GM23248 (cell line): ENCODE measurements at regions of chr10 and their contacts with region 1.

Region 1: DNA sequence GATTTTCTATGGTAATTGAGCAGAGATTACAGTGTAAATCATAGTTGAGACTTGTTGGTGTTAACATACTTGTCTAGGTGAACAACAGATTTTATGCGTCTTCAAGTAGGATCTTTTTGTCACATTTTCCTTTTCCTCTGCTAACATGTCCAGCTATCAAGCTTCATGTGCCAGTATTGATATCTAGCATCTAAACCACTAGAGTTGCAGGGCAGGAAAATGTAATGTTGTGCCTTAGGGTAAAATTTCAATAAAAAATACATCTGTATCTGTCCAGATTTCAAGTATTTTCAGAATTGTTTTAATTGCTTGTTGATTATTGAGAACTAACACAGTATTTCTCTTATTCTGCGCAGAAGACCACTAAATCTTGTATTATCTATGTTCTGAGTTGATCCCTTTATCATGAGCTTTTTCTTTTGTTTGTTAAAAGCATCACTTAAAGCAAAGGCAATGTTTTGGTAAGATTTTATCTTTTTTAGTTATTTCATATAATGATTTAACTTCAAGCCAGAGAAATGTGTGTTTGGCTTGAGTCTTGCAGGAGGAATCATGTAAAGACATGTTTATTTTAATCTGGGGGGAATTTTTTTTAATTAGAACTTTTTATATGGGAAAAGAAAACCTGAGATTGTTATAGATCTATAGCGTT is 16.5 kb downstream of the BICC1 start:
- DNase-seq: no peak
- H3K4me3 ChIP-seq: no peak overlapping the region
- H3K27ac ChIP-seq: no peak overlapping the region
- H3K4me1 ChIP-seq: peaks cover 11% of the 10 kb centered on the region
- H3K27me3 ChIP-seq: no peaks in the 10 kb centered on the region

Region 2: GRCh38 chr10:58641095-58641531 is 111.9 kb after region 1 on chr10:
- in situ Hi-C with region 1: loop called (anchors 10 kb)
- DNase-seq: peak; percentile 96
- H3K4me3 ChIP-seq: peak overlapping the region; percentile 57
- H3K27ac ChIP-seq: peak overlapping the region; percentile 96
- H3K4me1 ChIP-seq: peaks cover 86% of the 10 kb centered on the region
- H3K27me3 ChIP-seq: no peaks in the 10 kb centered on the region

Region 3: DNA sequence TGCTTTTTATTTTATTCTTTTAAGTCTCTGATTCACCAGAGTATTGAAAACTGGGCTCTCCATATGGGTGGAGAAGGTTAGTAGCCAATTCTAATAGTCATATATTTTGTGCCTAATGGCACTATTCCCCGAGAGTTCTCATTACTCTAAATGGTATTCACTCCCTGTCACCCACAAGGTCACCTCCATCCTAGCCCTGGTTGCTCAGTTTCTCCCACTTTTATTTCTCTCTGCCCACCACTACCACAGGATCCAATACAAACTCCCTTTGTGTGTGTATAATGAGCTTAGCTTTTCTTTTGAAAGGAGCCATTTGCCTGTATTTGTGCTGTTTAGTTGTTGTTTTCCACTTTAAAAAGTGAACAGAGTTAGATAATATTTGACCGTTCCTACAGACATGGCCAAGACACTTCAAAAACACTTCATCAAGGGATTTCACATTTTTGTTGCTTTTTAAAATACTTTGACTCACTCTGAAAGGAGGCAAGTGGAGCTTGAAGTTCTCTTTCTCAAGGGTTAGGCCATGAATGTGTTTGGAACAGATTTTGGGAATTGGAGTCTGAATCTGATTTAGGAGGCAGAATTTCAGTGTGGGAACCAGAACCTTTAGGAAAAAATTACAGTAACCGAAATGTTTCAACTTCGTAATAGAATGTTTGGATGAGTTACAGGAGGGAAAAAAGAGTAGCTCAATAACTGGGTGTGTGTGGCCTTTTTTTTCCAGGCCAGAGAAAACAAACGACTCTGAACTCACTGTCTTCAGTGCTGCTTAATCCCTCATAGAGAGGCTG is 304.8 kb after region 1 on chr10:
- in situ Hi-C with region 1: no loop called
- DNase-seq: peak; percentile 35
- H3K4me3 ChIP-seq: no peak overlapping the region
- H3K27ac ChIP-seq: peak overlapping the region; percentile 38
- H3K4me1 ChIP-seq: peaks cover 16% of the 10 kb centered on the region
- H3K27me3 ChIP-seq: no peaks in the 10 kb centered on the region